ENCODE measurements at regions of chr3 and their contacts with region 1.

Region 1: DNA sequence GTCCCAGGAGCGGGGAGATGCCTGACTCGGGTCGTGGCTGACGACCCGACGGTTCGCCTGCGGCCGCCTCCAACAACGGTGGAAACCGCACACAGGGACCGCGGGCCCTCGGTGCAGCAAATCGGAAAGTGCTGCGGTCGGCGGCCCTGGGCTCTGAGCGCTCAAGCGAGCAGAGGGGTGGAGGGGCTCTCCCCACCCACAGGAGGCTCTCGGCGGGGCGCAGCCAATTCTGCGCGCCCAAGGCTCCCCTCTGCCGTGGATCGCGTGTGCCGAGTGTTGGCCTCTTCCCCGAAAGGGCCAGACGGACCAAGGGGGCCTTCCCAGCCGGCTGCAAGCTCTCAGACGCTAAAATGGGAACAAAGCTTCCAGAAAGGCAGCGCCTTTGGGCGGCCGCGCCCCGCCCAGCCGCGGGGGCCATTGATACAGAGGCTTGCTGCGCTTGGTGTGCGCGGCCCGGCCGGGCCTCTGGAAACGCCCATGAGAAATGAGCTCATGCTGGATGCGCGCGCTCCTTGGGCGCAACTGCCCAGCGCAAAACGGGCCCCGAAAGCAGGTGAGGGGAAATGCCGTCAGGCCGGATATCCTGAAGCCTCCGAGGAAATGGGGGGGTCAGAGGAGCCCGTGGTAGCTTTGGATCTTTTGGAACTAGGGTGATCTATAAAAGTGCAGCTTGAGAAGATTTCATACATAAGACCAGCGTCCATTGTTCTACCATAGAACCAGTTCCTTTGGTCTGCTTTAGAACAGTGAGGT is 1.2 kb upstream of the GSK3B start:
- DNase-seq: peak; percentile 90
- ATAC-seq: peak; percentile 15
- H3K4me3 ChIP-seq: peak overlapping the region; percentile 82 to 96 (median 87)
- H3K4me3 Mint-ChIP-seq: no peak overlapping the region
- H3K27ac ChIP-seq: peak overlapping the region; percentile 100
- H3K27ac Mint-ChIP-seq: no peak overlapping the region
- H3K4me1 ChIP-seq: peaks cover 25 to 30% of the 10 kb centered on the region in 2 donors
- H3K4me1 Mint-ChIP-seq: peaks cover 8% of the 10 kb centered on the region
- H3K27me3 ChIP-seq: no peaks in the 10 kb centered on the region
- H3K27me3 Mint-ChIP-seq: no peaks in the 10 kb centered on the region
- CTCF ChIP-seq: no peak

Region 2: DNA sequence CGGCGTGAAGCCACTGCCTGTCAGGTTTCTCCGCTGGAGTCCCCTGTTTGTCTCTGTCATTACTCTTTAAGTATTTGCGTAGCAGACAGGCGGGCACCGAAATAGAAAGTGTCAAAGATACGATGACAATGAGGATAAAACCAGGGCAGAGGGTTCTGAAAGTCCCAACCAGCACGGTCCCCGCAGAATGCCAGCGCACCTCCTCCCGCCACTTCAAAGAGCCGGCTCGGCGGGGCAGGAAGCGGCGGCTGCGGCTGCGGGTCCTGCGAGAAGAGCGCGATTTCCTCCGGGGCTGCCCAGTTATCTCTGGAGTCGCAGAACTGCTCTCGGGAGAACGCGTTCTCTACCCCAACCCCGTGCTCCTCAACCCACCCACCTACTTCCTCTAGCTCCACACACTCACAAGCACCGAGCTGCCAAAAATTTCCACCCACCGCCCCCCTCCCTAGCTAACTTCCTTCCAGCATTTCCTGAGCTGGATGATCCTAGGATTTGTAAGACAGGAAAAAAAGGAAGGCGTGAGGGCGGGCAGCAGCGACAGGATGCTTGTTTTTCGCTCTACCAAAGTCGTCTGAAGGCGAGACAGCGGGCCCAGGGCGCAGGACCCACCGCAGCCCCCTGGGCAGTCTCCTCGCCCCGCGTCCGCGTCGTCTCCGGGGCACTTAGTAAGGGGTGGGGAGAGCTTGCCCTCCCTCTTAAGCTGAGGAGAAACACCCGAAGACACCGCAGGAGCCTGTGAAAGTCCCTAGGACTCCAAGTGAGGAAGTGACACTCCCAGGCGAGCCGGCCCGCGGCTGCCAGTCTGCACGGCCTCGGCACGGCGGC is 801.3 kb before region 1 on chr3 and contains the start of gene ARHGAP31:
- CTCF ChIA-PET with region 1: no interaction called
- POLR2A ChIA-PET with region 1: no interaction called
- intact Hi-C with region 1: loop called (anchors 10 kb)
- DNase-seq: peak; percentile 89
- ATAC-seq: peak; percentile 76
- H3K4me3 ChIP-seq: peak within 1 kb of the TSS; percentile 61 to 89 (median 80)
- H3K4me3 Mint-ChIP-seq: peak within 1 kb of the TSS; percentile 87
- H3K27ac ChIP-seq: peak within 1 kb of the TSS; percentile 91 to 96
- H3K27ac Mint-ChIP-seq: peak within 1 kb of the TSS; percentile 91
- H3K4me1 ChIP-seq: peaks cover 30 to 46% of the 10 kb centered on the region in 2 donors
- H3K4me1 Mint-ChIP-seq: peaks cover 58% of the 10 kb centered on the region
- H3K27me3 ChIP-seq: peaks cover 0 to 7% (median 0%) of the 10 kb centered on the region in 4 experiments
- H3K27me3 Mint-ChIP-seq: no peaks in the 10 kb centered on the region
- CTCF ChIP-seq: no peak
- total RNA-seq, gene ARHGAP31: 7.8 and 8.3 TPM in 2 replicates

Region 3: DNA sequence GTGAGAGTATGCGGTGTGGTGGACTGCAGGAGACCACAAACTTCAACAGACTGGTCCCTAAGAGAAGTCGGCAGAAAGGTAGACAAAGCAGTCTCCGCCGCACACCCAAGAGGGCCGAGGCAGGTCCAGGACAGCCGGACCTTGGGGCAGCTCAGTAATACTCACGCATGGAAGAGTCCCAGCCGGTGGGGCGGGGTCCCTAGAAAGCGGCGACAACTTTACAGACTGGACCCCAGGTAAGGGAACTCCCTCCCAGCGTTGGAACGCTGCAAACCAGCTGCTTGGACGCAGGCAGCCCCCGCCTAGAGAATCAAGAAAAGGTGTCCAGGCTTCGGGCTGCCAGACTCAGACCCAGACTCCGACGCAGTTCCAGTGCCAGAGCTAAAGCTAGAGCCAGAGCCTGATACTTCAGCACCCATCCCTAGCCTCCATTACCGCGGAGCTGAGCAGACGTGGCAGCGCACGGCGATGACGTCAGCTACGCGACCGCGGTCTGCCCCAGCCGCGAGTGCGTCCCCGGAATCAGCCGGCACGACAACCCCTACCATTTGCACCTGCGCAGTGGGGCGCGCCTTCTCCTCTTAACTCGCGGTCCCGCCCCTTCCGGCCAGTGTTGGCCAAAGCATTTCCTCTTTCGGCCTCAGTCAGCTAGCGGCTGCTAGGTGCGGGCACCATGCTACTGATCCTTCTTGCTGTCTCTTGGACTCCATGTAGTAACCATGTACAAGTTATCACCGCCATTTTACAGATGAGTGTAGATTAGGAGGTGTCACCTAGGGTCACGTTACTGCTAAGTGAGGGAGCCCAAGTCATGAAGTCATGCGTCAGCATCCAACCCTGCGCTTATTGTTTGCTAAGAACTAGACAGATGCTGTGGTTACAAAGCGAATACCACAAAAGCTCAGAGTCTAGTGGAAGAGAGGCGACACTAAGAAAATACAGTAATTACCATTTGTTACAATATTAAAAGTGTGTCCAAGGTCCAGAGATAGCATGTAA is 631.9 kb before region 1 on chr3 and contains the start of gene TMEM39A:
- CTCF ChIA-PET with region 1: no interaction called
- POLR2A ChIA-PET with region 1: no interaction called
- intact Hi-C with region 1: loop called (anchors 1 kb)
- DNase-seq: peak; percentile 99
- ATAC-seq: peak; percentile 87
- H3K4me3 ChIP-seq: peak within 1 kb of the TSS; percentile 76 to 99 (median 85)
- H3K4me3 Mint-ChIP-seq: peak within 1 kb of the TSS; percentile 96
- H3K27ac ChIP-seq: peak within 1 kb of the TSS; percentile 68 to 88
- H3K27ac Mint-ChIP-seq: peak within 1 kb of the TSS; percentile 99
- H3K4me1 ChIP-seq: peaks cover 24 to 25% of the 10 kb centered on the region in 2 donors
- H3K4me1 Mint-ChIP-seq: peaks cover 37% of the 10 kb centered on the region
- H3K27me3 ChIP-seq: no peaks in the 10 kb centered on the region
- H3K27me3 Mint-ChIP-seq: no peaks in the 10 kb centered on the region
- CTCF ChIP-seq: no peak
- total RNA-seq, gene TMEM39A: 39.9 and 50.3 TPM in 2 replicates

Region 4: DNA sequence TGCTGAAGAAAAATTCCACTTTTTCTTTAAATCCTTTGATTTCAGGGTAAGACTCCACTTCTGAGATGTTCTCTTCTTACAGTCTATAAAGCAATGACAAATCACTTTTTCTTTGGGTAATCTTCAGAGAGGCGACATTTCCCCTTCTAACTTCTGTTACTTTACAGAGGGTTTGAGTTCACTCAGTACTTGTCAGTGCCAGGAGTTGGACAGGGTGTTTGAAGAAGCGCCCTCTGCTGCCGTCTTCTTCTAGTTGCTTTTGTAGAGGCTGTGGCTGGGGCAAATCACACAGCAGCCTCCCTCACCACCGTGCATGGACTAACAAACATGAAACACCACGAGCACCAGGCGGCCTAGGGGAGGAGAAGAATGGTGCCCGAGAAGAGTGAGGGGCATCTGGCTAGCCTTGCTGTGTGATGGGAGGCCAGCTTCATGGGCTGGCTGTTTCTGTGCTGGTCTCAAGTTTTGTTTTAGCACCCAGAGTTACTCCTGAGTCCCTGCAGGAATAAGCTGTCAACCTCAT is 535.9 kb before region 1 on chr3 and contains the start of gene CD80:
- CTCF ChIA-PET with region 1: no interaction called
- POLR2A ChIA-PET with region 1: no interaction called
- intact Hi-C with region 1: loop called (anchors 10 kb)
- DNase-seq: peak; percentile 85
- ATAC-seq: peak; percentile 60
- H3K4me3 ChIP-seq: peak within 1 kb of the TSS in 4 of 5 experiments; percentile 42 to 71 (median 60)
- H3K4me3 Mint-ChIP-seq: peak within 1 kb of the TSS; percentile 75
- H3K27ac ChIP-seq: peak within 1 kb of the TSS; percentile 71 to 92
- H3K27ac Mint-ChIP-seq: peak within 1 kb of the TSS; percentile 91
- H3K4me1 ChIP-seq: peaks cover 49 to 71% of the 10 kb centered on the region in 2 donors
- H3K4me1 Mint-ChIP-seq: peaks cover 80% of the 10 kb centered on the region
- H3K27me3 ChIP-seq: no peaks in the 10 kb centered on the region
- H3K27me3 Mint-ChIP-seq: no peaks in the 10 kb centered on the region
- CTCF ChIP-seq: peak; percentile 58
- total RNA-seq, gene CD80: 26.5 and 28.0 TPM in 2 replicates

Region 5: GRCh38 chr3:119891944-119892721 is 203.3 kb before region 1 on chr3:
- CTCF ChIA-PET with region 1: interaction called, 4 read pairs
- POLR2A ChIA-PET with region 1: no interaction called
- intact Hi-C with region 1: loop called (anchors 5 kb)
- DNase-seq: peak; percentile 70
- ATAC-seq: peak; percentile 41
- H3K4me3 ChIP-seq: no peak overlapping the region
- H3K4me3 Mint-ChIP-seq: no peak overlapping the region
- H3K27ac ChIP-seq: no peak overlapping the region
- H3K27ac Mint-ChIP-seq: no peak overlapping the region
- H3K4me1 ChIP-seq: no peaks in the 10 kb centered on the region
- H3K4me1 Mint-ChIP-seq: peaks cover 4% of the 10 kb centered on the region
- H3K27me3 ChIP-seq: no peaks in the 10 kb centered on the region
- H3K27me3 Mint-ChIP-seq: no peaks in the 10 kb centered on the region
- CTCF ChIP-seq: peak; percentile 86

Region 6: DNA sequence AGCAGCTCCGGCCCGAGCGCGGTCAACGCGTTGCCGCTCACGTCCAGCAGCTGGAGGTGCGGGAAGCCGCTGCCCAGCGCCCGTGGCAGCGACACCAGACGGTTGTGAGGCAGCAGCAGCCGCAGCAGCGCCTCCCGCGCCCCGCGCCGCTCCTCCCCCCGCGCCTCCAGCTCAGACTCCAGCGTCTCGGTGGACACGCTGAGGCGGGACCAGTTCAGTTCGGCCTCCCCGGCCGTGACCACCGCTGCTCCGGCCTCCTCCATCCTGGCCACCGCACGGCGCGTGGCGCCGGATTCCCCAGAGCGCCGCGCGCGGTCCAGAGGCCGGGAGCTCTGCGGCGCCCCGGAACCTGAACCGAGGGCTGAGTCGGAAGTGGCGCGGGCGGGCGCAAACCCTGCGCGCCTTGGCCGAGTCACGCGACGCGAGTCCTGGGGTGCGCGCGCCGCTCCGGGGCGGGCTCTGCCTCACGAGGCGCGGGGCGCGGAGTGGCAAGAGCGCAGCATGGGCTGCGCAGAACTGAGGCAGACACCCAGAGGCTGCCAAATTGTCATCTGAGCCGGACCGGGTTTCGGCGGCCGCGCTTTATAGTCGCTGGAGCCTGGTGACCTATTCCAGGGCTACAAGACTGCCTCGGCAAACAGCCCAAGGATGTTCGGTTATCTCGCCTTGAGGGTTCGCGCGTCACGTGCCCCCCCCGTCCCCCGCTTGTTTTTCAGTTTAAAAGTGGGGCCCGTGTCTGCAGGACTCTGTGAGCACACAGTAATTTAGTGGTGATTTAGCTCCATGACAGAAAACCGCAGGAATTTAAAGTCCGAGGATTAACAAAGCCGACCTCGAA is 253.8 kb after region 1 on chr3 and contains the start of gene LRRC58:
- CTCF ChIA-PET with region 1: no interaction called
- POLR2A ChIA-PET with region 1: interaction called, 18 read pairs
- intact Hi-C with region 1: loop called (anchors 1 kb)
- DNase-seq: peak; percentile 95
- ATAC-seq: peak; percentile 89
- H3K4me3 ChIP-seq: peak within 1 kb of the TSS; percentile 61 to 99 (median 88)
- H3K4me3 Mint-ChIP-seq: peak within 1 kb of the TSS; percentile 95
- H3K27ac ChIP-seq: peak within 1 kb of the TSS; percentile 63 to 85
- H3K27ac Mint-ChIP-seq: peak within 1 kb of the TSS; percentile 94
- H3K4me1 ChIP-seq: peaks cover 14 to 17% of the 10 kb centered on the region in 2 donors
- H3K4me1 Mint-ChIP-seq: peaks cover 41% of the 10 kb centered on the region
- H3K27me3 ChIP-seq: peaks cover 0 to 10% (median 0%) of the 10 kb centered on the region in 4 experiments
- H3K27me3 Mint-ChIP-seq: no peaks in the 10 kb centered on the region
- CTCF ChIP-seq: peak; percentile 25
- total RNA-seq, gene LRRC58: 16.7 TPM in 2 replicates

Region 7: GRCh38 chr3:120596116-120596852 is 500.9 kb after region 1 on chr3 and contains the start of gene NDUFB4:
- CTCF ChIA-PET with region 1: no interaction called
- POLR2A ChIA-PET with region 1: interaction called, 4 read pairs
- intact Hi-C with region 1: loop called (anchors 5 kb)
- DNase-seq: peak; percentile 97
- ATAC-seq: peak; percentile 97
- H3K4me3 ChIP-seq: peak within 1 kb of the TSS; percentile 59 to 94 (median 86)
- H3K4me3 Mint-ChIP-seq: peak within 1 kb of the TSS; percentile 92
- H3K27ac ChIP-seq: peak within 1 kb of the TSS; percentile 72 to 95
- H3K27ac Mint-ChIP-seq: peak within 1 kb of the TSS; percentile 96
- H3K4me1 ChIP-seq: peaks cover 15 to 19% of the 10 kb centered on the region in 2 donors
- H3K4me1 Mint-ChIP-seq: peaks cover 11% of the 10 kb centered on the region
- H3K27me3 ChIP-seq: no peaks in the 10 kb centered on the region
- H3K27me3 Mint-ChIP-seq: no peaks in the 10 kb centered on the region
- CTCF ChIP-seq: no peak
- total RNA-seq, gene NDUFB4: 58.1 and 68.4 TPM in 2 replicates